ENCODE measurements at regions of chr1 and their contacts with region 1.

Region 1: DNA sequence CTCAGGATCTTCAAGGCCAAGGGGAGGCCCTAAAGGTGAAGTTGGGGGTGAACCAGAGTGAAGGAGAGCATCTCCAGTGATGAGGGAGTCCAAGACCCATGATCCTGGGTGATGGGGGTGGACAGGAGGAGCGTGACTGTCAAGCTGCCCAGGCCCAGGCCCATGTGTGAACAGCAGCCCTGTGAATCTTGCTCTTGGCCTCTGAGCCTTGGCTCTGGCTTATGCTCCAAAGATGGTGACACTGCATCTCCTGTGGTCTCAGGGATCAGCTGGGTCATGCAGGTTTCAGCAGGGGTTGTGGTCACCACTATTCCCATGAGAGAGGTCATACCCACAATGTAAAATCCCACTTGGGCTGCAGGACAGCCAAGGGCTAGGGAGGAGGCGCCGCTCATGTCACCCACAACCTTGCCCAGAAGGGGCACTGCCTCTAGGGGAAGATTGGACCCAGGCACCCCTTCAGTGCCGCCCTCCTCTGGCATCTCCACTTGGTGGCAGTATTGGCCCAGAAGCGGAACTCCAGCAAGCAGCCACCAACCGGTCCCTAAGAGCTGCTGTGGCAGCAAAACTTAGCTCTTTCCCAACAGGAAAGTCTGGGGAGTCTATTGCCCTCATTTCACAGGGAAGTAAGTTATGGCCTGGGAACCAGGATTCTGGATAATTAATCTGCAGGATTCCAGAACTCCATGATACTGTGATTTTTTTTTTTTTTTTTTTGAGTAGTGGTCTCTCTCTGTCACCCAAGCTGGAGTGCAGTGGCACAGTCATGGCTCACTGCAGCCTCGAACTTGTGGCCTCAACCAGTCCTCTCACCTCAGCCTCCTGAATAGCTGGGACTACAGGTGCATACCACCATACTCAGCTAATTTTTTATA is 7.5 kb upstream of the WNT3A start:
- H3K4me3 Mint-ChIP-seq: no peak overlapping the region
- H3K27ac Mint-ChIP-seq: no peak overlapping the region
- H3K4me1 Mint-ChIP-seq: peaks cover 6% of the 10 kb centered on the region
- H3K27me3 Mint-ChIP-seq: peaks cover 21% of the 10 kb centered on the region

Region 2: DNA sequence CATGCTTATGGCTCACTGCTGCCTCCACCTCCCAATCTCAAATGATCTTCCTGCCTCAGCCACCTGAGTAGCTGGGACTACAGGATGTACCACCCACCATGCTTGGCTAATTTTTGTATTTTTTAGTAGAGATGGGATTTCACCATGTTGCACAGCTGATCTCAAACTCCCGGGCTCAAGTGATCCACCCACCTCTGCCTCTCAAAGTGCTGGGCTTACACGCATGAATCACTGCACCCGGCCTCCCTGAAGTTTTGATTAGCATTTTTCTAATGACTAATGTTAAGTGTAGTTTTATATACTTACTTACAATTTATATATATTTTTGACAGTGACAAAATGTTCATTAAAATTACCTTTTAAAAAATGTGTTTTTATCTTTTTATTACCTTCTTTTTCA is 394.8 kb before region 1 on chr1:
- intact Hi-C with region 1: no loop called
- H3K4me3 Mint-ChIP-seq: no peak overlapping the region
- H3K27ac Mint-ChIP-seq: no peak overlapping the region
- H3K4me1 Mint-ChIP-seq: no peaks in the 10 kb centered on the region
- H3K27me3 Mint-ChIP-seq: no peaks in the 10 kb centered on the region

Region 3: DNA sequence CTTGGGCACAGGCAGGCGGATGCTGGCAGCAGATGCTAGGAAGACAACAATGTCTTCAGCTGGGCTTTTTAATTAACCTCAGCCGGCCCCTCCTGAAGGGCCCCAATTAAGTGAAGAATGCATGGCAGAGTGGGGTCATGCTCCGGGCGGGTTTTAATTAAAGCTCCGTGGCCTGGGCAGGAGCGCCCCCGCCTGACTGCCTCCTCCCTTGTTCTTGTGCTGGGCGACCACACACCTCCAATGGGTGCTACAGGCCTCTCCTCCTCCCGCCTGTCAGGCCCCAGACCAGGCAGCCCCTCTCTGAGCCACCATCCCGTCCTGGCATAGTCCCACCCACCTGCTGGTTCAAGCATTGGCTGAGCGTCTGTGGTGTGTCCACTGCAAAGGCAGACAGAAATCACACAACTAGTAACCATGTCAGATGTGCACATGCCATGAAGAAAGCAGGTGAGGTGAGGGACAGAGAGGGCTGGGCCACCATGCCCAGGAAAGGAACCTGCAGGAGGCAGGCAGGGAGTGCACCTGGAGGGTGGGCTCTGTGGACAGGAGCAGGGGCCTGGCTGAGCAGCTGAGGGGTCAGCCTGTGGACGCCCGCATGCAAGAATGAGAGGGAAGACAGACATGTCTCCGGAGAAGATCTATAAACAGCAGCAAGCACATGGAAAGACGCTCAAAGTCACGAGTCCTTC is 74.7 kb after region 1 on chr1:
- intact Hi-C with region 1: loop called (anchors 10 kb)
- H3K4me3 Mint-ChIP-seq: no peak overlapping the region
- H3K27ac Mint-ChIP-seq: no peak overlapping the region
- H3K4me1 Mint-ChIP-seq: peaks cover 5% of the 10 kb centered on the region
- H3K27me3 Mint-ChIP-seq: peaks cover 39% of the 10 kb centered on the region

Region 4: GRCh38 chr1:228515200-228515834 is 516.0 kb after region 1 on chr1:
- intact Hi-C with region 1: loop called (anchors 1 kb)
- H3K4me3 Mint-ChIP-seq: no peak overlapping the region
- H3K27ac Mint-ChIP-seq: no peak overlapping the region
- H3K4me1 Mint-ChIP-seq: peaks cover 16% of the 10 kb centered on the region
- H3K27me3 Mint-ChIP-seq: peaks cover 40% of the 10 kb centered on the region